AG04450 (cell line): ENCODE measurements at regions of chr15 and their contacts with region 1.

Region 1: GRCh38 chr15:40274350-40275274 is 8.3 kb downstream of the ANKRD63 start:
- DNase-seq: peak; percentile 58
- H3K4me3 ChIP-seq: no peak overlapping the region
- H3K27ac ChIP-seq: no peak overlapping the region
- H3K27me3 ChIP-seq: peaks cover 32% of the 10 kb centered on the region
- CTCF ChIP-seq: peak; percentile 100

Region 2: GRCh38 chr15:39728845-39729244 is 545.8 kb before region 1 on chr15:
- CTCF ChIA-PET with region 1: no interaction called
- POLR2A ChIA-PET with region 1: no interaction called
- DNase-seq: no peak
- H3K4me3 ChIP-seq: no peak overlapping the region
- H3K27ac ChIP-seq: no peak overlapping the region
- H3K27me3 ChIP-seq: no peaks in the 10 kb centered on the region
- CTCF ChIP-seq: no peak

Region 3: GRCh38 chr15:40038638-40039543 is 235.7 kb before region 1 on chr15 and contains the start of gene SRP14:
- CTCF ChIA-PET with region 1: interaction called, 24 read pairs
- POLR2A ChIA-PET with region 1: no interaction called
- DNase-seq: peak; percentile 68
- H3K4me3 ChIP-seq: peak within 1 kb of the TSS; percentile 97
- H3K27ac ChIP-seq: peak within 1 kb of the TSS; percentile 86
- H3K27me3 ChIP-seq: no peaks in the 10 kb centered on the region
- CTCF ChIP-seq: no peak
- polyA plus RNA-seq, gene SRP14: 426 and 559 TPM in 2 replicates

Region 4: DNA sequence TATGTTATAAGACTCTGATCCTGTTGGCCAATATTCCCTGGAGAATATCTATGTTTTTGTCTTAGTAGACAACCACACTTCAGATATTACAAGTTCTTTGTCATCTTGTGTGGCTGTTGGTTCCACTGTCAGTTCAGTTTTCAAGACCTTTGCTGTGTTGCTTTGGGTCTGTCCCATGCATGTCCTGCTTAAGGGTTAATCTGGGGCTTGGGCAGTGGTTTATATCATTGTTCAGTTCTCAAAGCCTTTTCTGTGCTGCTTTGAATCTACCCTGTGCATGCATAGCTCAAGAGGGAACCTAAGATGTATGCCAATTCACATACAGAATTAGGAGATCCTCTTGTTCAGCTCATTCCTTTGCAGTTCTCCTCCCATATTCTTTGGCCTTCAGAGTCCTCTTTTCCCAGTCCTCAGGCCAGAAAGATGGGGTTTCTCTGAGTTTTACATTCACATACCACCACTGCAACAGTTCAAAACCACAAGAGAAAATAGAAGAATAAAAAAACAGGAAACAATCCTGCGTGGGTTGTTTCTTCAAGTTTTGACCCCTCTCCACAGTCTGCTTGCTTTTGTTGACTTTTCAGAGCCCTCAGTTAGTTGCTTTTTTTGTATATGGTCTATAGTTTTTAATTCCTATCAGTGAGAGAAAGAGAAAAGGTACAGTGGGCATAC is 92.1 kb before region 1 on chr15:
- CTCF ChIA-PET with region 1: interaction called, 14 read pairs
- POLR2A ChIA-PET with region 1: no interaction called
- DNase-seq: no peak
- H3K4me3 ChIP-seq: no peak overlapping the region
- H3K27ac ChIP-seq: no peak overlapping the region
- H3K27me3 ChIP-seq: no peaks in the 10 kb centered on the region
- CTCF ChIP-seq: no peak

Region 5: GRCh38 chr15:40226736-40227135 is 47.9 kb before region 1 on chr15:
- CTCF ChIA-PET with region 1: interaction called, 670 read pairs
- POLR2A ChIA-PET with region 1: no interaction called
- DNase-seq: no peak
- H3K4me3 ChIP-seq: no peak overlapping the region
- H3K27ac ChIP-seq: no peak overlapping the region
- H3K27me3 ChIP-seq: no peaks in the 10 kb centered on the region
- CTCF ChIP-seq: no peak

Region 6: DNA sequence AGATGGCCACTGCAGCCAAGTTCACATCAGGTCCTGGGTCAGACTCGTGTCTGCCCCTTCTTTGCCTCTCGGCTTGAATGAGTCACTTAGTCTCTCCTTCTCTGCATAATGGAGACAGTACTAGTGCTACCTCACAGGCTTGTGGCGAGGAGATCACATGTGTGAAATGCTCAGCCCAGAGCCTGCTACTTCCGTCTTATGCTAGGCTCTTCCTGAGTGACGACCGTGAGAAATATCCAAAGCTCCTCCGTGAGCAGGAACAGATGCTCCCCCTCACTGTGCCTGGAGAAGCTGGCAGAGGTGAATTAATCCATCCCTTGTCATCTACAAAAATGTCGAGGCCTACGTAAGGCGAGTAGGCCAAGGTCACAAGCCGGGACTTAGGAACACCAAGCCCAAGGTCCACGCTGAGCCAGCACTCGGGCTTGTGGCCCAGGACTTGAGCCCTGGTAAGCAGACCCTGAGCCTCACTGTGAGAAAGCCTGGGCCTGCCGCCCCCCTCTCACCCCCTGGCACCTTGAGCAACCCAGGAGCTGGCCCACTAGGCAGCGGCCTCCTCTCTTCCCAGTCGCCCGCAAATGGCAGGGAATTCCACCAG is 17.9 kb before region 1 on chr15:
- CTCF ChIA-PET with region 1: interaction called, 82 read pairs
- POLR2A ChIA-PET with region 1: no interaction called
- DNase-seq: no peak
- H3K4me3 ChIP-seq: no peak overlapping the region
- H3K27ac ChIP-seq: no peak overlapping the region
- H3K27me3 ChIP-seq: peaks cover 33% of the 10 kb centered on the region
- CTCF ChIP-seq: no peak

Region 7: GRCh38 chr15:40344631-40345120 is 70.1 kb after region 1 on chr15:
- CTCF ChIA-PET with region 1: interaction called, 13 read pairs
- POLR2A ChIA-PET with region 1: no interaction called
- DNase-seq: no peak
- H3K4me3 ChIP-seq: no peak overlapping the region
- H3K27ac ChIP-seq: no peak overlapping the region
- H3K27me3 ChIP-seq: no peaks in the 10 kb centered on the region
- CTCF ChIP-seq: peak; percentile 77